Ascending aorta (tissue), 2 donors: ENCODE measurements at regions of chr13 and their contacts with region 1.

Region 1: GRCh38 chr13:79423801-79424642 is 18.0 kb upstream of the RBM26 start:
- DNase-seq: no peak
- H3K4me3 ChIP-seq: no peak overlapping the region
- H3K27ac ChIP-seq: no peak overlapping the region
- H3K4me1 ChIP-seq: no peaks in the 10 kb centered on the region
- H3K27me3 ChIP-seq: no peaks in the 10 kb centered on the region
- CTCF ChIP-seq: peak; percentile 51 to 69 (median 67)

Region 2: DNA sequence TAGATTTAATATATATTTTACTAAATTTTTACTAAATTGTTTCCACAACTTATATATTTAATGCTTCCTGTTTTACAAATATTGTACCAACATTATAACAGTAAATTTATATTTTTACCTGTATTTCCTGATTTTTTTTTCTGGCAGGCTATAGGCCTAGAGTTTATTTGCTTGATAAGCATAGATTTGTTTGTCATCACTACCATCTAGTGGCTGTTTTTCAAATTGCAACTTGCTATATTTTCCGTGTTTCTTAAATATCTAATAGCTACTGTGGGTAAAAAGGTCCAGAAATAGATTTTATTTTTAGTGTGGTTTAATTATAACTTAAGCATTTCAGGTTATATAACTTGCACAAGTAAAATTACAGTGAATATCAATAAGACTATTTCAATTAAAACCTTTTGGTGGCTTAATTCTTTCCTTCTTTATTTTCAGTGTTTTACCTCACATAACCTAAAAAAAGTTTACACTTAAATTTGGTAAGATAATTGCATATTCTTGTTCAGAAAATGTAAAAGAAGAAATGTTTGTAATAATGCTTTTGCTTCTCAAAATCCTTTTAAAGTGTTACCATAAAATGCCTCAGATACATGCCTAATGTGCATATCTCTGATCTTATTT is 117.5 kb after region 1 on chr13:
- intact Hi-C with region 1: loop called (anchors 1 kb)
- DNase-seq: no peak
- H3K4me3 ChIP-seq: no peak overlapping the region
- H3K27ac ChIP-seq: no peak overlapping the region
- H3K4me1 ChIP-seq: no peaks in the 10 kb centered on the region
- H3K27me3 ChIP-seq: no peaks in the 10 kb centered on the region
- CTCF ChIP-seq: peak; percentile 61 to 84 (median 82)